ENCODE measurements at regions of chr13 and their contacts with region 1.

Region 1: GRCh38 chr13:33560726-33561125 is 257.2 kb upstream of the RFC3 start:
- DNase-seq: no peak
- H3K4me3 ChIP-seq: no peak overlapping the region
- H3K27ac ChIP-seq: no peak overlapping the region
- H3K4me1 ChIP-seq: peaks cover 0 to 6% (median 0%) of the 10 kb centered on the region in 6 donors
- H3K27me3 ChIP-seq: no peaks in the 10 kb centered on the region
- CTCF ChIP-seq: no peak
- POLR2A ChIP-seq: no peak

Region 2: DNA sequence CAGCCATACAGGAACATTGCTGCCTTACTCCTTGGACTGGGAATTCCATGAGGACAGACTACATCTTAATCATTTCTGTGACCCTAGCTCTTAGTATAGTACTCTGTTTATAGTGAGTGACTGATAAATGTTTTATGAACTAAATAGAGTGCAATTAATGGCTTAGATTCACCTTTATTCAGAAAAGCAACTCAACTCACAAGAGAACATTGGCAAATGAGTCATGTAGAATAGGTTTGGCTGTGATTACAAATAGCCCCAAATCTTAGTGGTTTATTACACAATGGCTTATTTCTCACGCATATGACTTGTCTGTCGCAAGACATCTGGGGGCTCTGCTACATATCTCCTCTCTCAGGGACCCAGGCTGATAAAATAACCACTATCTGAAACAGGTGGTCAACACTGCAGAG is 666.1 kb before region 1 on chr13:
- intact Hi-C with region 1: no loop called
- DNase-seq: no peak
- H3K4me3 ChIP-seq: no peak overlapping the region
- H3K27ac ChIP-seq: no peak overlapping the region
- H3K4me1 ChIP-seq: no peaks in the 10 kb centered on the region
- H3K27me3 ChIP-seq: no peaks in the 10 kb centered on the region
- CTCF ChIP-seq: no peak
- POLR2A ChIP-seq: no peak

Region 3: GRCh38 chr13:33710924-33711323 is 150.2 kb after region 1 on chr13:
- intact Hi-C with region 1: loop called (anchors 10 kb)
- DNase-seq: no peak
- H3K4me3 ChIP-seq: no peak overlapping the region
- H3K27ac ChIP-seq: no peak overlapping the region
- H3K4me1 ChIP-seq: no peaks in the 10 kb centered on the region
- H3K27me3 ChIP-seq: no peaks in the 10 kb centered on the region
- CTCF ChIP-seq: no peak
- POLR2A ChIP-seq: no peak